PC-3 (cell line): ENCODE measurements at regions of chrX and their contacts with region 1.

Region 1: DNA sequence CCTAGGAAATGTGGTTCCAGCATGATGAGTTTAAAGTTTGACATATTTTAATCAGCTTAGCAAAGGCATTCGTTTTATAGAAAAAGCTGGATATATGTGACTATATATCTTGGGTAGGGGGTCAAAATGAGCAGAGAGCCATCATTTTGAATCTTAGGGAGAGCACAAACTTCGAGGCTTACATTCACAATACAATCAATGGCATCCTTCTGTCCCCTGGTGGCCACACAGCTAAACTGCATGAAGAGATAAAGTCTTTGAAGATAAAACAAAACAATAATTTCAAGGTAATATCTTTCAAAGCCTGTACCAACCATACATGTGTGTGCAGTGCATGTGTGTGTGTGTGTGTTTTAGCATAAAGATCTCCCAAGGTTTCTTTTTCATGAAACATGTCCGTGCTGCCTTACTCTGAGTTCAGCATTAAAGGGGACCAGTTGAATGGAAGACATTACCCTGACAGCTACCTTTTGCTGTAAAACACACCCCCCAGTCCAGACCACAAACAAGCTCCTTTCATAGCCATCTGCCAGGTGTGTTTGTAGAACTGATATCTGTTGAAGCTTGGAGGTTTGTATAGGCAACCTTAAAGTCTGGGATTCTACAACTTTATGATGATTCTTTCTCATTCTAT is 22.0 kb downstream of the DYNLT3 start:
- DNase-seq: peak; percentile 61
- ATAC-seq: peak; percentile 67
- H3K4me3 ChIP-seq: peak overlapping the region; percentile 21; the same call in 1 of the 2 replicates
- H3K27ac ChIP-seq: peak overlapping the region; percentile 48; the same call in 1 of the 2 replicates
- H3K4me1 ChIP-seq: peaks cover 12% of the 10 kb centered on the region
- H3K27me3 ChIP-seq: no peaks in the 10 kb centered on the region
- CTCF ChIP-seq: peak; percentile 90

Region 2: GRCh38 chrX:37509349-37509748 is 316.0 kb before region 1 on chrX:
- CTCF ChIA-PET with region 1: no interaction called
- POLR2A ChIA-PET with region 1: no interaction called
- intact Hi-C with region 1: loop called (anchors 2 kb)
- DNase-seq: peak; percentile 28
- ATAC-seq: peak; percentile 71; the same call in 1 of the 2 replicates
- H3K4me3 ChIP-seq: no peak overlapping the region
- H3K27ac ChIP-seq: no peak overlapping the region
- H3K4me1 ChIP-seq: no peaks in the 10 kb centered on the region
- H3K27me3 ChIP-seq: no peaks in the 10 kb centered on the region
- CTCF ChIP-seq: peak; percentile 53; the same call in 1 of the 2 replicates

Region 3: GRCh38 chrX:37677765-37678164 is 147.6 kb before region 1 on chrX:
- CTCF ChIA-PET with region 1: no interaction called
- POLR2A ChIA-PET with region 1: no interaction called
- intact Hi-C with region 1: loop called (anchors 10 kb)
- DNase-seq: no peak
- ATAC-seq: no peak
- H3K4me3 ChIP-seq: no peak overlapping the region
- H3K27ac ChIP-seq: no peak overlapping the region
- H3K4me1 ChIP-seq: peaks cover 13% of the 10 kb centered on the region
- H3K27me3 ChIP-seq: no peaks in the 10 kb centered on the region
- CTCF ChIP-seq: no peak

Region 4: DNA sequence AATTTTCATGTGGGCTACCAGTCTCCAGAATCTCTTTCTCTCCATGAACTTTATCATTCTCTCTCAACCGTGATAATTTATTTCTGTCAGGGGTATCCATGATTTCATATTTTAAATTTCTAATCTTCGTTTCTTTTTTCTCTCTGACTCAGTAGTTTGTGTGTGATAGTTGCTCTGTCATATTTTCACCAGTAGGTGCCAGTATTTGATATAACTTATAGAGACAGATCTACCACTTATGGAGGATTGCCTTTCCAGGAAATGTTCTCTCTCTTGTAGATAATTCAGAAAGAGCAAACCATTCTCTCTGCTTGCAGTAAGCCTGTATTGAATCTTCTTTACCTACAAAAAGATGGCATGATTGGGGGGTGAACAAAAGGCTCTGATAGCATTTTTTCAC is 101.4 kb after region 1 on chrX:
- CTCF ChIA-PET with region 1: interaction called, 5 read pairs
- POLR2A ChIA-PET with region 1: no interaction called
- intact Hi-C with region 1: loop called (anchors 5 kb)
- DNase-seq: peak; percentile 69
- ATAC-seq: peak; percentile 39; the same call in 1 of the 2 replicates
- H3K4me3 ChIP-seq: no peak overlapping the region
- H3K27ac ChIP-seq: no peak overlapping the region
- H3K4me1 ChIP-seq: peaks cover 14% of the 10 kb centered on the region
- H3K27me3 ChIP-seq: no peaks in the 10 kb centered on the region
- CTCF ChIP-seq: peak; percentile 80